ENCODE measurements at regions of chr3 and their contacts with region 1.

Region 1: GRCh38 chr3:51384726-51385473 is at the start of gene MANF:
- DNase-seq: peak; percentile 99
- ATAC-seq: peak; percentile 98 to 99
- total RNA-seq, gene MANF: 59.2 to 97.0 TPM

Region 2: DNA sequence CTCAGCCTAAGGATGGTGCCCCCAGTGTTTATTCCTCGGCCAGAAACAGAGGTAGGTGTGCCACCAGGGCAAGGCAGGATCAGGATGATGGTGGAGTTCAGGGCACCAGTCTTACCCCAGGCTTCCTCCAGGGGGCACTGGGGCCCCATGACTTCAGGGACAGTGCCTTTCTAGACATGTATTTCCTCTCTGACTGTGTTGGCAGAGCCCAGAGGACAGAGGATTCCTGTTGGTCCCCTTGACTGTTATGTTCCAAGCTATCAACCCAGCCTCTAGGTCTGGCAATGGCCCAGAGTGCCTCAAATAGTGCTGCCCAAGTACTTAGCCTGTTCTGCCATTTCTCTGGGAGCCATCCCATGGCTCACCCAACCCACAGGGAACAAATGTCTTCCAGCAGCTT is 812.7 kb before region 1 on chr3:
- intact Hi-C with region 1: loop called in 1 of 2 experiments (anchors 10 kb)
- DNase-seq: peak; percentile 79
- ATAC-seq: peak; percentile 9 to 13

Region 3: GRCh38 chr3:51216291-51216690 is 168.6 kb before region 1 on chr3:
- intact Hi-C with region 1: no loop called
- DNase-seq: no peak
- ATAC-seq: no peak

Measured in left cardiac atrium (tissue), 4 donors.